IMR-90 (cell line): ENCODE measurements at regions of chr7 and their contacts with region 1.

Region 1: GRCh38 chr7:138570715-138571114 is 110.7 kb downstream of the TRIM24 start:
- DNase-seq: no peak
- ATAC-seq: no peak
- H3K4me3 ChIP-seq: no peak overlapping the region
- H3K27ac ChIP-seq: no peak overlapping the region
- H3K4me1 ChIP-seq: no peaks in the 10 kb centered on the region
- H3K27me3 ChIP-seq: no peaks in the 10 kb centered on the region
- CTCF ChIP-seq: no peak
- POLR2A ChIP-seq: no peak
- RAD21 ChIP-seq: no peak

Region 2: DNA sequence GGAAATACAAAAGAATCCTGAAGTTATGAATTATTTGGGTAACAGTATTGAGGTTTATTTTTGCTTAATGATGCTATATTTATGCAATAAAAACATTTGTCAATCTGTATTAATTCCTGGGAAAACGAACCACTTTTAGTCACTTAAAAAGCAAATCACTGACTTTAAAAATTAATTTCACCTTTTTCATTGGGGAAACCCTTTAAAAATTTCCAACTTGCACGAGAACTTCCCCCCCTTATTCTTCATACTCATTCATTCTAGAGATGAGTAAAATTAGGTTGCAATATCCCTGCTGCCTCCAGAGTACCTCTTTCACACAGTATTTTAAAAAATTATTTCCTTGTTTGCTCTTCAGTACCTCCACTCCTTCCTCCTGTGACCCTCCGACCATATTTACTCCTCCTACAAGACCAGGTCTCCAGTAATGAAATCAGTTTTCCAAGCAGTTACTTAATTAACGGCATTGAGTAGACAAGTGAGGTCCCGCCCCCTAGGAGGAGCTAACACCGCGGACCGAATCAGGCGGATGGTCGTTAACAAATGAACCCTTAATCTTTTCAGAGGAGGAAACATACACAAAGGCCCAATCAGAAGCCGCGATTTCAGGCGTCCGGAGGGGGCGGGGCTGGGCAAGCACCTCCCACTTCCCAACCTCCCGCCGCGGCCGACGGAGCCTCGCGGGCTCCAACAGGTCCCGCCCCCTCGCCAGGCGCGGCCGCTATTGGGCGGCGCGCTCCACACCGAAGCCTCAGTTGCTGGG is 111.1 kb before region 1 on chr7:
- CTCF ChIA-PET with region 1: no interaction called
- POLR2A ChIA-PET with region 1: no interaction called
- dilution Hi-C with region 1: no loop called
- in situ Hi-C with region 1: no loop called
- intact Hi-C with region 1: loop called (anchors 5 kb)
- DNase-seq: no peak
- ATAC-seq: peak; percentile 95
- H3K4me3 ChIP-seq: peak overlapping the region; percentile 61
- H3K27ac ChIP-seq: no peak overlapping the region
- H3K4me1 ChIP-seq: peaks cover 3% of the 10 kb centered on the region; the same call in 1 of the 2 replicates
- H3K27me3 ChIP-seq: no peaks in the 10 kb centered on the region
- CTCF ChIP-seq: 0 out of 2 replicates have a peak, but pooled peaks have one; percentile 10
- POLR2A ChIP-seq: no peak
- RAD21 ChIP-seq: no peak

Region 3: GRCh38 chr7:139016931-139017511 is 446.3 kb after region 1 on chr7:
- CTCF ChIA-PET with region 1: no interaction called
- POLR2A ChIA-PET with region 1: no interaction called
- dilution Hi-C with region 1: no loop called
- in situ Hi-C with region 1: no loop called
- intact Hi-C with region 1: no loop called
- DNase-seq: peak; percentile 75
- ATAC-seq: peak; percentile 97
- H3K4me3 ChIP-seq: no peak overlapping the region
- H3K27ac ChIP-seq: no peak overlapping the region
- H3K4me1 ChIP-seq: no peaks in the 10 kb centered on the region
- H3K27me3 ChIP-seq: peaks cover 5% of the 10 kb centered on the region; the same call in 1 of the 2 replicates
- CTCF ChIP-seq: peak; percentile 63
- POLR2A ChIP-seq: no peak
- RAD21 ChIP-seq: peak; percentile 53